ENCODE measurements at regions of chr2 and their contacts with region 1.

Region 1: GRCh38 chr2:223957092-223957851 is at the start of gene MRPL44:
- DNase-seq: peak; percentile 98
- ATAC-seq: peak; percentile 98
- H3K4me3 Mint-ChIP-seq: peak within 1 kb of the TSS; percentile 95
- H3K27ac Mint-ChIP-seq: peak within 1 kb of the TSS; percentile 94
- H3K4me1 Mint-ChIP-seq: peaks cover 75% of the 10 kb centered on the region
- H3K27me3 Mint-ChIP-seq: no peaks in the 10 kb centered on the region
- CTCF ChIP-seq: no peak
- total RNA-seq, gene MRPL44: 29.9 and 30.4 TPM in 2 replicates

Region 2: GRCh38 chr2:222655787-222656525 is 1301.3 kb before region 1 on chr2 and contains the start of gene FARSB:
- CTCF ChIA-PET with region 1: no interaction called
- POLR2A ChIA-PET with region 1: no interaction called
- intact Hi-C with region 1: loop called (anchors 1 kb)
- DNase-seq: peak; percentile 81
- ATAC-seq: peak; percentile 93
- H3K4me3 Mint-ChIP-seq: peak within 1 kb of the TSS; percentile 97
- H3K27ac Mint-ChIP-seq: peak within 1 kb of the TSS; percentile 99
- H3K4me1 Mint-ChIP-seq: peaks cover 47% of the 10 kb centered on the region
- H3K27me3 Mint-ChIP-seq: no peaks in the 10 kb centered on the region
- CTCF ChIP-seq: no peak
- total RNA-seq, gene FARSB: 21.6 and 23.3 TPM in 2 replicates

Region 3: DNA sequence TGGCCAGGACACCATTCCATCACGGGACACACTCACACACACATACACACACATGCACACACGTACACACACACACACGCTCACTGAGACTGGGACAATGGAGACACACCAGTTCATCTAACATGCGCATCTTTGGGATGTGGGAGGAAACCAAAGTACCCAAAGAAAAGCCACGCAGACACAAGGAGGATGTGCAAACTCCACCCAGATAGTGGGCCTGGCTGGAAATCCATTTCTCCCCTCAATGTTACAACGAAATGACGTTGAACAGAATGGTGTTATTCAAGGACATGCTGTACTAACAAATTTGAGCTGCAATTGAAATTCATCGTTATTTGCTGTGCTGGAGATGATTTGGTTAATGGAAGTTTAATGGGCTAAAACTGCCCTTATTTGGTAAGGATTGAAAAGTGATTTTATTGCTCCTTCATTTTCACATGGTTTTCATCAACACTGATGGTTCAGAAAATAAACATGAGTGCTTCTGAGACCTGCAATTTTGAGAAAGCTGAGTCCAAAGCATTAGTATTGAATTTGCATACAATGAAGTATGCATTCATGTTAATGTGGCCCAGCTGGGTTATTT is 795.3 kb before region 1 on chr2:
- CTCF ChIA-PET with region 1: no interaction called
- POLR2A ChIA-PET with region 1: no interaction called
- intact Hi-C with region 1: no loop called
- DNase-seq: no peak
- ATAC-seq: no peak
- H3K4me3 Mint-ChIP-seq: no peak overlapping the region
- H3K27ac Mint-ChIP-seq: no peak overlapping the region
- H3K4me1 Mint-ChIP-seq: no peaks in the 10 kb centered on the region
- H3K27me3 Mint-ChIP-seq: peaks cover 3% of the 10 kb centered on the region
- CTCF ChIP-seq: no peak

Region 4: DNA sequence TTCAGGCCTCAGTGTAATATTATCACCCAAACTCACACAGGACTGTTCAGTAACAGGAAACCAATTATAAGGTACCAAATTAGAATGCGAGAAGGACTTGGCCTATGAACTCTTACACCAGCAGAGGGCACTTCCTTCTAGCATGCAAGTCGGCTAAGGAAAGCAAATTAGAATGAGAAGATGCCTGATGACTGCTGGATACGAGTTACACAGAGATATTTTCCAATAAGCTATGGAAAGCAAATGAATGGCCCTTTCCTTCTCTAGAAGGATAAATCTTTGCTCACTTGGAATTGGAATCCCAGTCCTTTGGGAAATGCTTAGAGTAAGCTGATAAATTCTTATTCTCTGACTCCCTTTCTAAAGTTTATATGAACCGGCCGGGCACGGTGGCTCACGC is 229.7 kb before region 1 on chr2:
- CTCF ChIA-PET with region 1: no interaction called
- POLR2A ChIA-PET with region 1: no interaction called
- intact Hi-C with region 1: loop called (anchors 5 kb)
- DNase-seq: no peak
- ATAC-seq: peak; percentile 65
- H3K4me3 Mint-ChIP-seq: no peak overlapping the region
- H3K27ac Mint-ChIP-seq: no peak overlapping the region
- H3K4me1 Mint-ChIP-seq: no peaks in the 10 kb centered on the region
- H3K27me3 Mint-ChIP-seq: no peaks in the 10 kb centered on the region
- CTCF ChIP-seq: peak; percentile 20

Region 5: GRCh38 chr2:223837287-223838061 is 119.8 kb before region 1 on chr2 and contains the start of gene AP1S3:
- CTCF ChIA-PET with region 1: no interaction called
- POLR2A ChIA-PET with region 1: no interaction called
- intact Hi-C with region 1: loop called (anchors 1 kb)
- DNase-seq: peak; percentile 76
- ATAC-seq: peak; percentile 75
- H3K4me3 Mint-ChIP-seq: peak within 1 kb of the TSS; percentile 99
- H3K27ac Mint-ChIP-seq: peak within 1 kb of the TSS; percentile 96
- H3K4me1 Mint-ChIP-seq: peaks cover 64% of the 10 kb centered on the region
- H3K27me3 Mint-ChIP-seq: no peaks in the 10 kb centered on the region
- CTCF ChIP-seq: no peak
- total RNA-seq, gene AP1S3: 46.0 and 46.3 TPM in 2 replicates

Region 6: GRCh38 chr2:223970343-223971128 is 13.3 kb after region 1 on chr2:
- CTCF ChIA-PET with region 1: interaction called, 25 read pairs
- POLR2A ChIA-PET with region 1: interaction called, 4 read pairs
- intact Hi-C with region 1: no loop called
- DNase-seq: no peak
- ATAC-seq: peak; percentile 64
- H3K4me3 Mint-ChIP-seq: no peak overlapping the region
- H3K27ac Mint-ChIP-seq: no peak overlapping the region
- H3K4me1 Mint-ChIP-seq: peaks cover 3% of the 10 kb centered on the region
- H3K27me3 Mint-ChIP-seq: no peaks in the 10 kb centered on the region
- CTCF ChIP-seq: peak; percentile 90

Region 7: GRCh38 chr2:224585205-224586088 is 628.2 kb after region 1 on chr2 and contains the start of gene CUL3:
- CTCF ChIA-PET with region 1: no interaction called
- POLR2A ChIA-PET with region 1: no interaction called
- intact Hi-C with region 1: loop called (anchors 1 kb)
- DNase-seq: peak; percentile 99
- ATAC-seq: peak; percentile 89
- H3K4me3 Mint-ChIP-seq: peak within 1 kb of the TSS; percentile 96
- H3K27ac Mint-ChIP-seq: peak within 1 kb of the TSS; percentile 93
- H3K4me1 Mint-ChIP-seq: peaks cover 47% of the 10 kb centered on the region
- H3K27me3 Mint-ChIP-seq: no peaks in the 10 kb centered on the region
- CTCF ChIP-seq: no peak
- total RNA-seq, gene CUL3: 99.4 and 114 TPM in 2 replicates

Measured in activated B cell treated with CpG ODN at 0.5 μM for 24 hours (primary cell).